Common myeloid progenitor, CD34-positive (primary cell): ENCODE measurements at regions of chr10 and their contacts with region 1.

Region 1: DNA sequence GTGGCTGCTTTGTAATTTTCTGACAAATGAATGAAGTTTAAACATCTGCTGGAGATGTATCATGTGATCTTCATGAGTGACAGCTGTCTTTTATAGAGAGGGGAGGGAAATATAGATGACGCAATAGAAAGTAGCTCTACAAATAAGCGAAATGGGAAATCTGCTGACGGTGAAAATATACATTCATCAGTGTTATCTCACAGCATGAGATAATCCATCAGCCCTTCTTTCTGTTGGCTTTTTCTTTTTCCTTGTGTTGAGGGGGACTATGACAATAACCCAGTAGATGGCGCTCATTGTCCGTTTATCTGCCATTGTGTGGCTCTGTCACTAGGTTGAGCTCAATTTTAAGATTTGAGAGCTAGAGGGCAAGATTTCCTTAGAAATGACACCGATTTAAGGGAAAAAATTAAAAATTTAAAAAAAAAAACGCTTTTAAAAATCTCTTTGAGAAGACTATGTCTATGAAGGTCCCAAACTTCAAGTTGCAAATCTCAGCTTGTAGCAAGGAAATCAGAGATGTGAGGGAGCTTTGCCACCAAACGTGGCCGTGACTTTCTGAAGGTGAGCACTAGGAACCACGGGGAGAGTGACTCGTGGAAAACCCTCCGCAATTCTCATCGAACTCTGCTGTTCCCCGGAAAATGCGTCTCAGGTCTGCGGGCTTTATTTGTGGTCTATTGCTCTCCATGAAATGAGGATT is 114.6 kb upstream of the SFMBT2 start:
- DNase-seq: peak; percentile 72 to 86 (median 79)
- H3K4me3 ChIP-seq: no peak overlapping the region
- H3K27ac ChIP-seq: no peak overlapping the region
- H3K4me1 ChIP-seq: no peaks in the 10 kb centered on the region
- H3K27me3 ChIP-seq: peaks cover 0 to 32% (median 8%) of the 10 kb centered on the region in 5 experiments

Region 2: DNA sequence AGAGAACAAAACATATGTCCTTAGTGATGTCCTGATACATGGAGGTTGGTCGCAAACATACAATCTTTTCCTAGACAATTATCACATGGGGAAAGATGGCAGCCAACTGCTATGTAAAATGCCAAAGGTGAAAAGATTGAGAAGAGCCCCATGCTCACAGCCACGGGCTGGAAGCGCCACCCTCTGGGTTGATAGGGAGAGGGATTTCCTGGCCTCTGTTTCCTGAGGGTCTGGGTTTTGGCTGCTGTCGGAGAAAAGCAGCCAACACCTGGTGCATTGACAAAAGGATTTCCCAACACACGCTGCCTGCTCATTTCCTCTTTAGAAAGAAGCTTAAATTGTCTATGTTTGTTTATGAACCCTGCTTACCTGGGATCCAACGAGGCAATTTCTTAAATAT is 97.5 kb after region 1 on chr10:
- CTCF ChIA-PET with region 1: interaction called, 13 read pairs
- POLR2A ChIA-PET with region 1: no interaction called
- DNase-seq: peak; percentile 13 to 31 (median 29)
- H3K4me3 ChIP-seq: no peak overlapping the region
- H3K27ac ChIP-seq: no peak overlapping the region
- H3K4me1 ChIP-seq: peaks cover 0 to 10% (median 4%) of the 10 kb centered on the region in 4 experiments
- H3K27me3 ChIP-seq: no peaks in the 10 kb centered on the region